Adrenal gland (tissue), 19 donors: ENCODE measurements at regions of chr1 and their contacts with region 1.

Region 1: GRCh38 chr1:115138968-115139367 is 49.7 kb upstream of the TSPAN2 start:
- DNase-seq: peak; percentile 78 to 94 (median 90)
- H3K4me3 ChIP-seq: no peak overlapping the region
- H3K27ac ChIP-seq: no peak overlapping the region
- H3K4me1 ChIP-seq: no peaks in the 10 kb centered on the region
- H3K27me3 ChIP-seq: no peaks in the 10 kb centered on the region
- CTCF ChIP-seq: peak; percentile 81 to 93 (median 89)
- POLR2A ChIP-seq: no peak

Region 2: GRCh38 chr1:115476616-115477015 is 337.6 kb after region 1 on chr1:
- intact Hi-C with region 1: loop called (anchors 2 to 5 kb)
- DNase-seq: no peak
- H3K4me3 ChIP-seq: no peak overlapping the region
- H3K27ac ChIP-seq: no peak overlapping the region
- H3K4me1 ChIP-seq: no peaks in the 10 kb centered on the region
- H3K27me3 ChIP-seq: no peaks in the 10 kb centered on the region
- CTCF ChIP-seq: no peak
- POLR2A ChIP-seq: no peak

Region 3: DNA sequence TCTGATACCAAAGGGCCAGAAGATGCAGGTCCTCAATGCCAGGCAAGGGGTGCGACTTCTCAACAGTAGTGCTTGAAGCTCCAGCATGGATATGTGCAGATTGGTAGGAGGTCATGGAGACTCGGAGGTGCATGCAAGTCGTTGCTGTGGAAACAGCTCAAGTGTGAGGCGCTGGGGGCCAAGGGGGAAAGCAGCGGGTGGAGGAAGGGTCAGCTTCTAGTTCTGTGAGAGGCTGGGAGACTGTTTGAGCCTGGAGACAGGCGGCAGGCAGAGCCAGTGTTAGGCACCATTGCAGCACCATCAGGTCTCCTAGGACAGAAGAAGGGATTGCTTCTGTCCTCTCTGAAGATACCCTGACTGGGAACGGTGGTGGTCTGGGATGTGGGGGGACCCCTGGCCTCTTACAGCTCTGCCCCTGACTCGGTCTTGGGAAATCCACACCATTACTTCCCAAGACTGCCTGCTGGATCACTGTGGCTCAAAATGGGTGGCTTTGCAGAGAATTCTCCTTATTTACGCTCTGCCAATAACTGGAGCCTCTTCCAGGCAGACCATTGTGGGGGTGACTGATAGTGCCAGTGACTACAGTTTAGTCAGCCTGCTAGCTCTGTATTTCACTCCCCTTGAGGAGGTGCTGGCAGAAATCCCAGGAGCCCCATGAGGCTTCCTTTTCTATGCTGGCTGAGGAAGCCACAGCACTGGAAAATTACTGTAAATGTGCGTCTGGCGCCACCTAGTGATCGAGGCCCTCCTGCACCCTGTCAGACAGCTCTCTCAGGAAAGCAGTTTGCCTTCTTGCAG is 456.5 kb after region 1 on chr1:
- intact Hi-C with region 1: loop called (anchors 5 to 10 kb)
- DNase-seq: peak; percentile 82 to 95 (median 90)
- H3K4me3 ChIP-seq: no peak overlapping the region
- H3K27ac ChIP-seq: peak overlapping the region in 1 of 5 donors; percentile 10
- H3K4me1 ChIP-seq: peaks cover 0 to 4% of the 10 kb centered on the region in 2 donors
- H3K27me3 ChIP-seq: no peaks in the 10 kb centered on the region
- CTCF ChIP-seq: peak; percentile 81 to 93 (median 90)
- POLR2A ChIP-seq: no peak